Activated CD8-positive, alpha-beta T cell treated with anti-CD3 and anti-CD28 coated beads for 36 hours (primary cell): ENCODE measurements at regions of chrX and their contacts with region 1.

Region 1: DNA sequence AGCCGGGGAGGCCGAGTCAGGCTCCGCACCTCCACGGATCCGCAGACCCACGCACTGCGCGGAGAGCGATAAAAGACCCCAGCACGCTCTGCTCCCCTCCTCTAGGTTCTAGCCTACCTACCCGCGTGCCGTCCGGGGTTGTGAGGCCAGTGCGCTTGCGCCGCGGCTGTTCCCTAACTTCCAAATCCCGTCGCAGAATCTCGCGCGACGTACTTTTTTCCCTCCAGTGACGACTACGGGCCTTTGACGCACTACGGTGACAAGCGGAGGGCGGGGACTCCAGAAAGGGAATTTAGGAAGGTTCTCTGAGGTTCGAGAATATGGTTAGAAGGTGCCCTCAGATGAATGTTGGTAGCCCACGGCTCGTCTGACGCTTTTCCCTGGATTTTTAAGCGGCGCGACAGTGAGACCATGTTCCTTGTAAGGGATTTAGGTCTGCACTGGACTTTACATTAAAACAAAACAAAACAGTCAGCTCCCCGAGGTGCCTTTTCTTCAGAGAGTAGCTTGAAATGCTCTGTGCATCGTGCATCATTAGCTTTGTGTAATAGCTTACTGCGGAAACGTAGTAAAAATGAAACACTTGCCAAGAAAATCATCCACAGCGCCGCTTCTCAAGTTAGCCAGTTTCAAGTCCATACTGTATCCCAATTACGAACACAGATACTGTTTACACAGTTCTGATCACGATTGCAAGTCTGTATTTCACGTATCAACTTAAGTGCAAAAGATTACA is at the start of gene NKRF:
- DNase-seq: peak; percentile 93
- ATAC-seq: peak; percentile 80
- H3K4me3 Mint-ChIP-seq: peak within 1 kb of the TSS; percentile 88
- H3K27ac Mint-ChIP-seq: peak within 1 kb of the TSS; percentile 95
- H3K4me1 Mint-ChIP-seq: peaks cover 33% of the 10 kb centered on the region
- H3K27me3 Mint-ChIP-seq: no peaks in the 10 kb centered on the region
- CTCF ChIP-seq: no peak
- total RNA-seq, gene NKRF: 22.3 to 23.5 TPM

Region 2: GRCh38 chrX:119516157-119516702 is 90.2 kb before region 1 on chrX:
- CTCF ChIA-PET with region 1: interaction called, 3 read pairs
- POLR2A ChIA-PET with region 1: no interaction called
- intact Hi-C with region 1: loop called (anchors 10 kb)
- DNase-seq: peak; percentile 46
- ATAC-seq: peak; percentile 97
- H3K4me3 Mint-ChIP-seq: no peak overlapping the region
- H3K27ac Mint-ChIP-seq: no peak overlapping the region
- H3K4me1 Mint-ChIP-seq: peaks cover 2% of the 10 kb centered on the region
- H3K27me3 Mint-ChIP-seq: no peaks in the 10 kb centered on the region
- CTCF ChIP-seq: peak; percentile 64

Region 3: DNA sequence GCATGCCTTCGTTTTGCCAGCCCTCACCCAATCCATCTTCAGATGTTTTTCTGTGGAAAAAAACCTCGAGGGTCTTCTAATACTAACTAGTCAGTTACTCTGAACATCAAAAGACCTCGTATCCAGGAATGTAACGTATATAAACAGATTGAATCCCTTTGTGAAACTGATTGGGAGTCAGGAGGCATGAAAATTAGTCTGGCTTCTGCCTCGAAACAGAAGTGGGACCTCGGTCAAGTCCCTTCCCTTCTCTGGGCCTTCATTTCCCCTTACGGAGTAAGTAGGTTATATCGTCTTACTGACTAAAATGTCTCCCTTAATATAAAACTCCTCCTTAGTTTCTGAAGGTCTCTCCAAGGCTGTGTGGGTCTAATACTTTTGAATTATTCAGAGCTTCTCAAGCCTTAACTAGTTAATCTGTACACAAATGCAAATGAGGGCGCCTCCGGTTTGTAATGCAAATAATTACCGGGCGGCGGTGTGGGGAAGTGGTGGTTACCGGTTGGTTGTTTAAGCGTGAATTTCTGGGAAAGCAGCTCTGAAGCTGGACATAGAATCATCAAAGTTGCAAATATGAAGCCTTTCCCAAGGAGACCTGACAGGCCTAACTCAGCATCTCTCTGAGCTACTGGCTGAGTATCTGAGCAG is 11.2 kb after region 1 on chrX:
- CTCF ChIA-PET with region 1: interaction called, 11 read pairs
- POLR2A ChIA-PET with region 1: interaction called, 11 read pairs
- intact Hi-C with region 1: no loop called
- DNase-seq: no peak
- ATAC-seq: no peak
- H3K4me3 Mint-ChIP-seq: no peak overlapping the region
- H3K27ac Mint-ChIP-seq: no peak overlapping the region
- H3K4me1 Mint-ChIP-seq: peaks cover 8% of the 10 kb centered on the region
- H3K27me3 Mint-ChIP-seq: no peaks in the 10 kb centered on the region
- CTCF ChIP-seq: no peak

Region 4: GRCh38 chrX:119753571-119754257 is 147.3 kb after region 1 on chrX:
- CTCF ChIA-PET with region 1: interaction called, 5 read pairs
- POLR2A ChIA-PET with region 1: no interaction called
- intact Hi-C with region 1: loop called (anchors 10 kb)
- DNase-seq: peak; percentile 69
- ATAC-seq: peak; percentile 62
- H3K4me3 Mint-ChIP-seq: no peak overlapping the region
- H3K27ac Mint-ChIP-seq: peak overlapping the region; percentile 94
- H3K4me1 Mint-ChIP-seq: peaks cover 51% of the 10 kb centered on the region
- H3K27me3 Mint-ChIP-seq: no peaks in the 10 kb centered on the region
- CTCF ChIP-seq: peak; percentile 62